Tibial artery (tissue), 4 donors: ENCODE measurements at regions of chr18 and their contacts with region 1.

Region 1: DNA sequence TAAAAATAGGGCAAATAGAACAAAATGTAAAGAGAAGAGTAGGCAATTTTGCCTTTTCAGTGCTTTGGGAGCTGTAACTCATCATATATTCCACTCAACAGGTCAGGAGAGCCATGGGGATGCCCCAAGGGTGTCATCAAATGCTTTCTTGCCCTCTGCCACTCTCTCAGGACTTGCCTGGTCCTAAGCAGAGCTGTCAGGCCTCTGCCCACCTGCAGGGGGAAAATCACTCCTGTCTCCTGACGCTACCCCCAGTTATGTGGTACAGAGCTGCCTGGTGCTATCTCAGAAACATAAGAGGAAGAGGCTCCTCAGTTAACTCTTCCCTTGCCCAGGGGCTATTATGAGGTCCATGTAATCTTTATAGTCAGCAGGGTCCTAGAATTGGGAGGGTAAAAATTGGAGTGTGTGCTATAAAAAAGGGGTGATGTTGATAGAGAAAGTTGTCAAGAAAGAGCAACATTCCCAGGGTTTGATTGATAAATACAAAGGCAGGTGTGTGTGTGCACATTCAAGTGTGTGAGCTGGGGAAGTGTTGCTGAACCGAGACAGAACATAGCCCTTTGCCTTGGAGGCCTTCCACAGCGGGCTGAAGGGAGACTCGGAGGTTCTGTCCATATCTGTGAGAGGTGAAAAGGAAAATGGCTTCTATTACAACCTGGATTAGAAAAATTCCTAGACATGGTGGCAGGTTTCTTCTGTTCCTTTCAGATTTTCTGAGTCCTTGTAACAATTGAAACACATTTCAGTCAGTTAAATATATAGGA is 25.4 kb downstream of the PTPRM start:
- DNase-seq: no peak
- H3K4me3 ChIP-seq: no peak overlapping the region
- H3K27ac ChIP-seq: no peak overlapping the region
- H3K4me1 ChIP-seq: peaks cover 0 to 12% (median 0%) of the 10 kb centered on the region in 4 donors
- H3K27me3 ChIP-seq: no peaks in the 10 kb centered on the region
- CTCF ChIP-seq: no peak

Region 2: DNA sequence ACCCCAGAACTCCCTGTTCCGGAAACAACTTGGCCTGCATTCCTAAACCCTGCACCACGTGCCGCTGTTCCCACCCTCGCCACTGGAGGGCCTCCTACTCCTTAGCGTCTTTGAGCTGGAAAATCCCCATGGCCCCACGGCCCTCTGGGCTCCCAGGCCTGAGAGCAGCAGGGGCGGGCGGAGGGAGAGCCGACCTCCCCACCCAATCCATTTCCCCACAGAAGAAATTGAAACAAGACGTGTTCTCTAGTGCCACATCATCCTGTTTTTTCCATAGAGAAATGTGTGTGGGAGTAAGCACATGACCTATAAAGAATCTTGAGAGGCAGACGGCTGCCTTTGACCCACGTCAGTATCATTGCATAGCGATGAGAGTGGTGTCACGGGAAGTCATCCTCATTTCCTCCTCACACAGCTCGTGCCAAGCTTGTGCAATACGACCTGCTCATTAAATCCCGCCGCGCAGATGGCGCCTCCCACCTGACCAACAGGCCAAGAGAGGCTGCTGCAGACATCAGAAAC is 554.1 kb before region 1 on chr18:
- intact Hi-C with region 1: loop called (anchors 5 kb)
- DNase-seq: peak; percentile 91 to 94
- H3K4me3 ChIP-seq: peak overlapping the region; percentile 33 to 40
- H3K27ac ChIP-seq: peak overlapping the region; percentile 52 to 58
- H3K4me1 ChIP-seq: peaks cover 0 to 14% (median 8%) of the 10 kb centered on the region in 4 donors
- H3K27me3 ChIP-seq: no peaks in the 10 kb centered on the region
- CTCF ChIP-seq: peak; percentile 76 to 78

Region 3: GRCh38 chr18:7696780-7697179 is 104.3 kb after region 1 on chr18:
- intact Hi-C with region 1: no loop called
- DNase-seq: no peak
- H3K4me3 ChIP-seq: no peak overlapping the region
- H3K27ac ChIP-seq: no peak overlapping the region
- H3K4me1 ChIP-seq: no peaks in the 10 kb centered on the region
- H3K27me3 ChIP-seq: no peaks in the 10 kb centered on the region
- CTCF ChIP-seq: no peak

Region 4: GRCh38 chr18:7727361-7728076 is 135.0 kb after region 1 on chr18:
- intact Hi-C with region 1: no loop called
- DNase-seq: no peak
- H3K4me3 ChIP-seq: no peak overlapping the region
- H3K27ac ChIP-seq: no peak overlapping the region
- H3K4me1 ChIP-seq: peaks cover 0 to 22% (median 4%) of the 10 kb centered on the region in 4 donors
- H3K27me3 ChIP-seq: no peaks in the 10 kb centered on the region
- CTCF ChIP-seq: no peak